Activated CD4-positive, alpha-beta T cell treated with anti-CD3 and anti-CD28 coated beads for 36 hours (primary cell): ENCODE measurements at regions of chr19 and their contacts with region 1.

Region 1: GRCh38 chr19:51473009-51473707 is 5.2 kb upstream of the CEACAM18 start:
- DNase-seq: peak; percentile 93
- ATAC-seq: peak; percentile 96
- H3K4me3 Mint-ChIP-seq: no peak overlapping the region
- H3K27ac Mint-ChIP-seq: no peak overlapping the region
- H3K4me1 Mint-ChIP-seq: peaks cover 20% of the 10 kb centered on the region
- H3K27me3 Mint-ChIP-seq: peaks cover 6% of the 10 kb centered on the region

Region 2: DNA sequence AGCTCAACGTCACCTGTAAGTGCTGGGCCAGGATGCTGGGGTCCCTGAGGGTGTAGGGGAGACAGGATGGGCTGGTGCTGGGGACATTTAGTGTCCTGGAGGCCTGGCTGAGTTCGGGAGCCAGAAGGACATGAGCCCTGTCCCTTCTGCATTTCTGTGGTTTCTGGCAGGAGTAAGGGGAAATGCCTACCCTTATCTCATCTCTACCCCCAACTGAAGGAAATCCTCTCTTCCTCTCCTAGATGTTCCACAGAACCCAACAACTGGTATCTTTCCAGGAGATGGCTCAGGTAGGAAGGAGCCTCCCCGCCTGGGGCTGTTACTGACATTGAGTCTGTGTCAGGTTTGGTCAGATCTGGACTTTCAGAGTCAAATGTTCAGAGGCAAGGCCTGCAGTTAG is 247.1 kb before region 1 on chr19:
- CTCF ChIA-PET with region 1: no interaction called
- POLR2A ChIA-PET with region 1: no interaction called
- intact Hi-C with region 1: no loop called
- DNase-seq: no peak
- ATAC-seq: no peak
- H3K4me3 Mint-ChIP-seq: no peak overlapping the region
- H3K27ac Mint-ChIP-seq: no peak overlapping the region
- H3K4me1 Mint-ChIP-seq: no peaks in the 10 kb centered on the region
- H3K27me3 Mint-ChIP-seq: peaks cover 43% of the 10 kb centered on the region

Region 3: DNA sequence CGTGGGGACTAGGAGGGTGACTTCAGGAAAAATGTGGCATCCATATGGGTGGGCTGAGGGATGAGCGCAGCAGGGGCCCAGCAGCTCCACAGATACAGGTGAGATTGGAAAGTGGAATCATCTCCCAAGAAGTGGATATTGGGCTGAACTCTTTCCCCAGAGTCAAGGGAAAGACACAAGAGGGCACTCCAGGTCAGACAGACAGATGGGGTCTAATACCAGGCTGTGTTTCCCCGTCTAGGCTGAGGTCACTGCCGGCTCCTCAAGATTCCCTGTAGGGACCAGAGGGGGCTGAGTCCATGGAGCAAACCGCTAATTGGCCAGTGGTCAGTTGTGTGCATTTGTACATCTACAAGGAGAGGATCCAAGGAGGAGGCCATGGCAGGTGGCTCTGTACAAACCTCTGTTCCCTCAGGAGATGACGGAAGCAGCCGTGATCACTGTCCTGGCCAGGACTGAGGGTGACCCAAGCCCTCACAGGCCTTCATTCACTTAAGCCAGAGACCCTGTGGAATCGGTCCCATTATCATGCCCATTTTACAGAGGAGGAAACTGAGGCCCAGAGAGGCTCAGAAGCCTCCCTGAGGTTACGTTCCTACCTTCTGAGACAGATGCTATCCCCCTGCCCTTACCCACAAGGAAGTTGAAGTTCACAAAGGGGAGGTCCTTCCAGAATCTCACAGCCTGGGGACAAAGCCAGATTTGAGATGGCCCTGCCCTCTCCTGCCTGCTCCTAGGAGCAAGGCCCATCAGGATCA is 176.6 kb before region 1 on chr19:
- CTCF ChIA-PET with region 1: no interaction called
- POLR2A ChIA-PET with region 1: no interaction called
- intact Hi-C with region 1: no loop called
- DNase-seq: no peak
- ATAC-seq: no peak
- H3K4me3 Mint-ChIP-seq: no peak overlapping the region
- H3K27ac Mint-ChIP-seq: no peak overlapping the region
- H3K4me1 Mint-ChIP-seq: no peaks in the 10 kb centered on the region
- H3K27me3 Mint-ChIP-seq: no peaks in the 10 kb centered on the region

Region 4: GRCh38 chr19:51422053-51422448 is 51.1 kb before region 1 on chr19:
- CTCF ChIA-PET with region 1: interaction called, 16 read pairs
- POLR2A ChIA-PET with region 1: no interaction called
- intact Hi-C with region 1: loop called in 1 of 2 experiments (anchors 1 kb)
- DNase-seq: peak; percentile 94
- ATAC-seq: peak; percentile 60
- H3K4me3 Mint-ChIP-seq: no peak overlapping the region
- H3K27ac Mint-ChIP-seq: no peak overlapping the region
- H3K4me1 Mint-ChIP-seq: peaks cover 24% of the 10 kb centered on the region
- H3K27me3 Mint-ChIP-seq: peaks cover 20% of the 10 kb centered on the region

Region 5: GRCh38 chr19:51461723-51462161 is 11.4 kb before region 1 on chr19:
- CTCF ChIA-PET with region 1: interaction called, 19 read pairs
- POLR2A ChIA-PET with region 1: no interaction called
- intact Hi-C with region 1: no loop called
- DNase-seq: no peak
- ATAC-seq: no peak
- H3K4me3 Mint-ChIP-seq: no peak overlapping the region
- H3K27ac Mint-ChIP-seq: no peak overlapping the region
- H3K4me1 Mint-ChIP-seq: peaks cover 9% of the 10 kb centered on the region
- H3K27me3 Mint-ChIP-seq: peaks cover 36% of the 10 kb centered on the region

Region 6: GRCh38 chr19:51514866-51515481 is 41.8 kb after region 1 on chr19:
- CTCF ChIA-PET with region 1: interaction called, 101 read pairs
- POLR2A ChIA-PET with region 1: no interaction called
- intact Hi-C with region 1: loop called (anchors 1 kb)
- DNase-seq: peak; percentile 41
- ATAC-seq: peak; percentile 73
- H3K4me3 Mint-ChIP-seq: no peak overlapping the region
- H3K27ac Mint-ChIP-seq: no peak overlapping the region
- H3K4me1 Mint-ChIP-seq: peaks cover 19% of the 10 kb centered on the region
- H3K27me3 Mint-ChIP-seq: peaks cover 17% of the 10 kb centered on the region

Region 7: GRCh38 chr19:51637362-51637978 is 164.3 kb after region 1 on chr19:
- CTCF ChIA-PET with region 1: interaction called, 28 read pairs
- POLR2A ChIA-PET with region 1: no interaction called
- intact Hi-C with region 1: loop called (anchors 1 to 5 kb)
- DNase-seq: no peak
- ATAC-seq: no peak
- H3K4me3 Mint-ChIP-seq: no peak overlapping the region
- H3K27ac Mint-ChIP-seq: no peak overlapping the region
- H3K4me1 Mint-ChIP-seq: no peaks in the 10 kb centered on the region
- H3K27me3 Mint-ChIP-seq: peaks cover 29% of the 10 kb centered on the region

Region 8: DNA sequence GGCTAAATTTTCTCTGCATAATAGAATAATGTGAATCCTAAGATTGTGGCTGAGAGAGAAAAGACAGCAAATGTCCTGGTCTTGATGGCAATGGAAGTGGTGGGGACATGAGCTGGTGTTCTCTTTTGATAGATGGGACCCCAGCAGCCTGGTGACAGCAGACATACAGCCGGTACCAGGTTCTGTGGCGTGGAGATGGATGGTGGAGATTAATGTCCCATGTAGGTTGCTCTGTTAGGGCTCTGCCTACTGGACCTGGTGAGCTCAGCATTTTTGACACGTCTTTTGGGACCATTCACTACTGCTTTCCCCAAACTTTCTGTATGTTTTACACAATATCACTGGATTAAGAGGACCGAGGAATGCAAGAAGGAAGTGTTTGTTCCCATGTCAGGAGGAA is 181.6 kb after region 1 on chr19:
- CTCF ChIA-PET with region 1: interaction called, 17 read pairs
- POLR2A ChIA-PET with region 1: no interaction called
- intact Hi-C with region 1: loop called (anchors 1 kb)
- DNase-seq: no peak
- ATAC-seq: no peak
- H3K4me3 Mint-ChIP-seq: no peak overlapping the region
- H3K27ac Mint-ChIP-seq: no peak overlapping the region
- H3K4me1 Mint-ChIP-seq: peaks cover 5% of the 10 kb centered on the region
- H3K27me3 Mint-ChIP-seq: peaks cover 26% of the 10 kb centered on the region

Region 9: DNA sequence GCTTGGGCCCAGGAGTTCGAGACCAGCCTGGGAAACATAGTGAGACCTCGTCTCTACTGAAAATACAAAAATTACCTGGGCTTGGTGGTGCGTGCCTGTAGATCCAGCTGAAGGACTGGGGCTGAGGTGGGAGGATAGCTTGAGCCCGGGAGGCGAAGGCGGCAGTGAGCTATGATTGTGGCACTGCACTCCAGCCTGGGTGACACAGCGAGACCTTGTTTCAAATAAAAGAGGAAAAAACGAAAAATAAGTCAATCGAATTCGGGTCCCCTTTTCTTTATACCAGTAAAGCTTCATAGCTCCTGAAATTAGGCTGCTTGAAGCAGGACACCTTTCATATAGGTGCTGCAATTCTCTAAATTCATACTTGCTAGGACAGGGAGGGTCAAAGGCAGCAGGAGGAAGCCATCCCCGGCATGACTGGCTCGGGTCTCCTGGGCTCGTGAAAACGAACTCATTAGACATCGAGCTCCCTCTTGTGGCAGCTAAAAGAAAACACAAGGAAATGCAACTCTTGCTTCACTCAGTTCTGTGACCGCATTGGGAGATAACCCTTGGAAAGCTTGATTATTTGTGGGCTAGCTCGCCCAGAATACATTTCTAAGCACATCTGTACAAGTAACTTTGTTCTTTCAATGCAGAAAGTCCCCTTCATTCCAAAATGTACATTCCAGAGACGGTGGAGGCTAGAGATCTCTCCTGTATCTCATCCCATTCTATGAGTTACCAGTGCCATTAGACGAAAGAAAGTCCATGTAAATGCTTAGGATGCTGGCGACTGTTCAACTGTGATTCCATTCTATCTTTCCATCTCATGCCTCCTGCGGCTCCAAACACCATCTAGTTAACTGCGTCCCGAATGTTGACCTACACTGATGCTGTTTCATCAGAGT is 304.7 kb after region 1 on chr19:
- CTCF ChIA-PET with region 1: interaction called, 4 read pairs
- POLR2A ChIA-PET with region 1: no interaction called
- intact Hi-C with region 1: loop called (anchors 2 to 10 kb)
- DNase-seq: peak; percentile 66
- ATAC-seq: peak; percentile 74
- H3K4me3 Mint-ChIP-seq: no peak overlapping the region
- H3K27ac Mint-ChIP-seq: no peak overlapping the region
- H3K4me1 Mint-ChIP-seq: peaks cover 6% of the 10 kb centered on the region
- H3K27me3 Mint-ChIP-seq: peaks cover 57% of the 10 kb centered on the region